ENCODE measurements at regions of chr6 and their contacts with region 1.

Region 1: GRCh38 chr6:39302669-39303424 is 11.4 kb downstream of the KCNK17 start:
- DNase-seq: peak; percentile 56 to 82
- H3K4me3 ChIP-seq: peak overlapping the region; percentile 32; the same call in 1 of the 2 replicates
- H3K27ac ChIP-seq: no peak overlapping the region
- H3K4me1 ChIP-seq: peaks cover 12% of the 10 kb centered on the region
- H3K27me3 ChIP-seq: no peaks in the 10 kb centered on the region
- CTCF ChIP-seq: peak; percentile 92

Region 2: DNA sequence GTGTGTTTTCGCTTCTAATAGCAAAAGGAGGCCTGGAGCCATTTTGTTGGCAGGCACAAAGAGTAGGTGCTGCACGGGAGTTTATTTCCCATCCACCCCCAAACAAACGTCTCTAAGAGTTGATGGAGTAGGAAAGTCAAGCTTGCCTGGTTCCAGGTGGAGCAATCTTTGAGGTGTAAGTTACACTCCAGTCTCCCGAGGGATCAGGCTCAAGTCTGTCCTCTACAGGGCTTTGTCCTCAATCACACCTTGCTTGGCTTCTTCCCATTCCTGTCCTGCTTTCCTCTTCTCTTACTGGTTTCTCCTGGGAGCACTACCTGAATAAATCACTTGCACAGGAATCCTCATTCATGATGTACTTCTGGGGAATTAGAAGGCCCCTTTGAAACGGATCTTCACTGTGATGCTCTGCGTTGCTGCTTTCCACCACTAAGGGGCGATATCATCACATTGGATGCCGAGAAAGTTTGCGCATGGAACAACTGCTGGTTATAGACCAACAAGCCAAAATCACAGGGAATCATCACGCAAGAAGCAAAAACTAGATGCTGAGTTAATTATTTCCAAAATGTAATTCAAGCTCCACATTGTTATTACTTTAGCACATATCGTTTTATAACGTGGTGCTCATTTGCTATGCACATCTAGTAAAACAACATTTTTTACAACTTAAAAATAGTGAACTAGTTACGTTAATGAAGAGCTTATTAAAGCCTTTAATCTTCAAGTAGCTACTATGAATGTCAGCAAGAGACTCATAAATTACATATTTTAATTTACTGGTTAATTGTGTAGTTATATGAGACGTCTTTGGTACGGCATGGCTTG is 430.9 kb before region 1 on chr6:
- CTCF ChIA-PET with region 1: no interaction called
- POLR2A ChIA-PET with region 1: no interaction called
- intact Hi-C with region 1: loop called (anchors 2 kb)
- DNase-seq: peak in 1 of 2 experiments; percentile 45
- H3K4me3 ChIP-seq: no peak overlapping the region
- H3K27ac ChIP-seq: no peak overlapping the region
- H3K4me1 ChIP-seq: no peaks in the 10 kb centered on the region
- H3K27me3 ChIP-seq: no peaks in the 10 kb centered on the region
- CTCF ChIP-seq: peak; percentile 87

Region 3: DNA sequence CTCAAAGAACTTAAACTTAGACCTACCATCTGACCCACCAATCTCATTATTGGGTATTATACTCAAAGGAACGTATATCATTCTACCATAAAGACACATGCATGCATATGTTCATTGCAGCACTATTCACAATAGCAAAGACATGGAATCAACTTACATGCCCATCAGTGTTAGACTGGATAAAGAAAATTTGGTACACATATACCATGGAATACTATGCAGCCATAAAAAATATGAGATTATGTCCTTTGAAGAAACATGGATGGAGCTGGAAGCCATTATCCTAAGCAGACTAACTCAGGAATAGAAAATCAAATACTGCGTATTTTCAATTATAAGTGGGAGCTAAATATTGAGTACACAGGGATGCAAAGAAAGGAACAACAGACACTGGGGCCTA is 420.7 kb before region 1 on chr6:
- CTCF ChIA-PET with region 1: interaction called, 14 read pairs
- POLR2A ChIA-PET with region 1: no interaction called
- intact Hi-C with region 1: no loop called
- DNase-seq: no peak
- H3K4me3 ChIP-seq: no peak overlapping the region
- H3K27ac ChIP-seq: no peak overlapping the region
- H3K4me1 ChIP-seq: no peaks in the 10 kb centered on the region
- H3K27me3 ChIP-seq: no peaks in the 10 kb centered on the region
- CTCF ChIP-seq: no peak

Region 4: DNA sequence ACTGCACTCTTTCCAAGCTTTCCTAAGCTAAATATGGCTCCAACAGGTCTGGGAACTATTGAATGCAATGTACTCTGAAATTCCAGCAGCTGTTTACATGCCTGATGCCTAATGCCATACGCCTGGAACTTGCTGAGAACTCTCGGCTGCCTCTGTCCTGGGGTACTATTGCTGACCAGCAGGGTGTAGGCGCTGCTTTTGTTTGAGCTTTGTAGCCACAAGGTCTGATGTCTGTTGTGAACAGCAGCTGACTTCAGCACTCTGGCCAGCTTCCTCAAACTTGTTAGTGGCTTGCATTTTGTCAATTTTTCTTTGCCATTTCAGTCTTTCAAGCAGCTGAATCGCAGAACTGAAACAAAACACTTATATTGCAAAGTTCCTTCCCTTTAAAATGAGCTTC is 214.5 kb before region 1 on chr6:
- CTCF ChIA-PET with region 1: no interaction called
- POLR2A ChIA-PET with region 1: no interaction called
- intact Hi-C with region 1: loop called (anchors 5 kb)
- DNase-seq: peak; percentile 17 to 53
- H3K4me3 ChIP-seq: no peak overlapping the region
- H3K27ac ChIP-seq: no peak overlapping the region
- H3K4me1 ChIP-seq: no peaks in the 10 kb centered on the region
- H3K27me3 ChIP-seq: peaks cover 98% of the 10 kb centered on the region
- CTCF ChIP-seq: peak; percentile 52

Region 5: GRCh38 chr6:39203852-39204375 is 98.9 kb before region 1 on chr6:
- CTCF ChIA-PET with region 1: interaction called, 20 read pairs
- POLR2A ChIA-PET with region 1: no interaction called
- intact Hi-C with region 1: no loop called
- DNase-seq: peak; percentile 97 to 98
- H3K4me3 ChIP-seq: peak overlapping the region; percentile 16; the same call in 1 of the 2 replicates
- H3K27ac ChIP-seq: peak overlapping the region; percentile 95
- H3K4me1 ChIP-seq: peaks cover 96% of the 10 kb centered on the region
- H3K27me3 ChIP-seq: no peaks in the 10 kb centered on the region
- CTCF ChIP-seq: no peak

Region 6: GRCh38 chr6:39228992-39229767 is 73.7 kb before region 1 on chr6 and contains the start of gene KCNK5:
- CTCF ChIA-PET with region 1: no interaction called
- POLR2A ChIA-PET with region 1: no interaction called
- intact Hi-C with region 1: loop called (anchors 1 kb)
- DNase-seq: peak; percentile 73 to 89
- H3K4me3 ChIP-seq: peak within 1 kb of the TSS; percentile 96
- H3K27ac ChIP-seq: peak within 1 kb of the TSS; percentile 34; the same call in 1 of the 2 replicates
- H3K4me1 ChIP-seq: peaks cover 39% of the 10 kb centered on the region
- H3K27me3 ChIP-seq: no peaks in the 10 kb centered on the region
- CTCF ChIP-seq: peak; percentile 86
- total RNA-seq, gene KCNK5: 11.9 and 14.3 TPM in 2 replicates

Region 7: GRCh38 chr6:39508515-39508914 is 205.7 kb after region 1 on chr6:
- CTCF ChIA-PET with region 1: no interaction called
- POLR2A ChIA-PET with region 1: no interaction called
- intact Hi-C with region 1: no loop called
- DNase-seq: no peak
- H3K4me3 ChIP-seq: no peak overlapping the region
- H3K27ac ChIP-seq: no peak overlapping the region
- H3K4me1 ChIP-seq: no peaks in the 10 kb centered on the region
- H3K27me3 ChIP-seq: peaks cover 15% of the 10 kb centered on the region
- CTCF ChIP-seq: no peak

Measured in PC-9 (cell line).